ENCODE measurements at regions of chr14 and their contacts with region 1.

Region 1: DNA sequence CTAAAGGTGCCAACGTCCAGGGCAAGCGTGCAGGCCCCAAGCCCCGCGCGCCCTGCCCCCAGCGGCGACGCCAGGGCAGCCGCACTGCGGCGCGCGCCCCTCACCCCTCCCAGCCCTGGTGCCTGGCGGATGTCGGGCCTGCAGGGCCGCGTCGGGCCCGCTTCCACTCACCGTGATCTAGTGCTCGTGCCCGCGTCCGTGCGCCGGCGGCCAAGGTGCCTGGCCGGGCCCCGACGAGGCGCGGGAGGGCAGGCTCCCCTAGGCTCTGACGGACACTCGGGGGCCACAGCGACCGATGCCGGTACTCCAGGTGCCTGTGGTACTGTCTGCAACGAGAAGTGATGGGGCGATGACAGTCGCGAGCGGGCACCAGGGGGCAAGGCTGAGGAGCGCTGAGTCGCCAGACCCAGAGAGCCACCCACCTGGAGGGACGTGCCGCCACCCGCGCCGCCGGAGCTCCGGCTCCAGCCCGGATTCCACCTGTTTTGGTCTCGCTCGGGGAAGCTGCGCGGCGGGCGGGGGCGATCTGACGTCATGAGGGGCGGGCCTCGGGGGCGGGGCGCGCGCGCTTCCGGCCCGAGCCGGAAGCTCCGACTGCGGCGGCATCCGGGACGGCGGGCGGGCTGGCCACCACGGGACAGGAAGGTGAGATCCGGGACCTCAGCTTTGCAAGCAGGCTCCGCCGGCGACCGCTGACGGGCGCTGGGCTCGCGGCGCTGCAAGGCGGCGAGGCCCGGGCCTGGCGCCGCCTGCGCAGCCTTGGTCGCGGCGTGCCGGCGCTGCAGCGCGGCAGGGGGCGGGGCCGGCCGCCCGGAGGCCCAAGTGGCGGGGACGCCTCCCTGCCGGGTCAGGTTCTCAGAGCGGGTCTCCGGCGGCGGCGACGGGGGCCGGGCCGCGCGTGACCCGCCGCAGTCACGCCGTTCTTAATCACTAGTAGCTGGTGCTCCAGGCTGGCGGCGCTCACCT is at the starts of genes LYSET and MOAP1:
- DNase-seq: peak; percentile 79
- ATAC-seq: peak; percentile 94
- H3K4me3 ChIP-seq: peak within 1 kb of the TSS; percentile 74 to 99 (median 90)
- H3K27ac ChIP-seq: peak within 1 kb of the TSS; percentile 86
- H3K4me1 ChIP-seq: peaks cover 30% of the 10 kb centered on the region
- H3K27me3 ChIP-seq: no peaks in the 10 kb centered on the region; a peak in 1 of 5 replicates
- CTCF ChIP-seq: peak; percentile 35; the same call in 1 of the 2 replicates
- EP300 ChIP-seq: no peak
- POLR2A ChIP-seq: peak; percentile 78 to 95
- RAD21 ChIP-seq: peak; percentile 25; the same call in 1 of the 2 replicates
- total RNA-seq, gene LYSET: 19.1 and 20.1 TPM in 2 replicates
- total RNA-seq, gene MOAP1: 14.6 and 14.9 TPM in 2 replicates

Region 2: GRCh38 chr14:92951912-92952471 is 232.7 kb before region 1 on chr14:
- CTCF ChIA-PET with region 1: no interaction called
- POLR2A ChIA-PET with region 1: no interaction called
- in situ Hi-C with region 1: no loop called
- intact Hi-C with region 1: no loop called
- DNase-seq: peak; percentile 37
- ATAC-seq: peak; percentile 92
- H3K4me3 ChIP-seq: no peak overlapping the region
- H3K27ac ChIP-seq: no peak overlapping the region
- H3K4me1 ChIP-seq: no peaks in the 10 kb centered on the region
- H3K27me3 ChIP-seq: no peaks in the 10 kb centered on the region; a peak in 1 of 5 replicates
- CTCF ChIP-seq: peak; percentile 97
- EP300 ChIP-seq: no peak
- POLR2A ChIP-seq: no peak
- RAD21 ChIP-seq: peak; percentile 97

Region 3: GRCh38 chr14:93206793-93207467 is 22.3 kb after region 1 on chr14 and contains the starts of genes GON7 and UBR7:
- CTCF ChIA-PET with region 1: no interaction called
- POLR2A ChIA-PET with region 1: interaction called, 26 read pairs
- in situ Hi-C with region 1: no loop called
- intact Hi-C with region 1: loop called (anchors 2 kb)
- DNase-seq: peak; percentile 96
- ATAC-seq: peak; percentile 96
- H3K4me3 ChIP-seq: peak within 1 kb of the TSS; percentile 77 to 98 (median 92)
- H3K27ac ChIP-seq: peak within 1 kb of the TSS; percentile 87
- H3K4me1 ChIP-seq: peaks cover 29% of the 10 kb centered on the region
- H3K27me3 ChIP-seq: no peaks in the 10 kb centered on the region; a peak in 1 of 5 replicates
- CTCF ChIP-seq: peak; percentile 74
- EP300 ChIP-seq: 0 out of 4 replicates have a peak, but pooled peaks of 1 of the 2 experiments have one; percentile 17
- POLR2A ChIP-seq: peak; percentile 76 to 82
- RAD21 ChIP-seq: peak; percentile 11; the same call in 1 of the 2 replicates
- total RNA-seq, gene GON7: 28.0 and 45.9 TPM in 2 replicates
- total RNA-seq, gene UBR7: 19.7 and 35.5 TPM in 2 replicates